ENCODE measurements at regions of chr15 and their contacts with region 1.

Region 1: GRCh38 chr15:69394556-69395282 is 19.4 kb upstream of the KIF23 start:
- DNase-seq: no peak
- ATAC-seq: peak; percentile 99
- H3K4me3 ChIP-seq: no peak overlapping the region
- H3K27ac ChIP-seq: no peak overlapping the region
- H3K4me1 ChIP-seq: no peaks in the 10 kb centered on the region
- H3K27me3 ChIP-seq: no peaks in the 10 kb centered on the region
- CTCF ChIP-seq: peak; percentile 85 to 93 (median 85)
- EP300 ChIP-seq: no peak
- POLR2A ChIP-seq: no peak
- RAD21 ChIP-seq: peak; percentile 61

Region 2: DNA sequence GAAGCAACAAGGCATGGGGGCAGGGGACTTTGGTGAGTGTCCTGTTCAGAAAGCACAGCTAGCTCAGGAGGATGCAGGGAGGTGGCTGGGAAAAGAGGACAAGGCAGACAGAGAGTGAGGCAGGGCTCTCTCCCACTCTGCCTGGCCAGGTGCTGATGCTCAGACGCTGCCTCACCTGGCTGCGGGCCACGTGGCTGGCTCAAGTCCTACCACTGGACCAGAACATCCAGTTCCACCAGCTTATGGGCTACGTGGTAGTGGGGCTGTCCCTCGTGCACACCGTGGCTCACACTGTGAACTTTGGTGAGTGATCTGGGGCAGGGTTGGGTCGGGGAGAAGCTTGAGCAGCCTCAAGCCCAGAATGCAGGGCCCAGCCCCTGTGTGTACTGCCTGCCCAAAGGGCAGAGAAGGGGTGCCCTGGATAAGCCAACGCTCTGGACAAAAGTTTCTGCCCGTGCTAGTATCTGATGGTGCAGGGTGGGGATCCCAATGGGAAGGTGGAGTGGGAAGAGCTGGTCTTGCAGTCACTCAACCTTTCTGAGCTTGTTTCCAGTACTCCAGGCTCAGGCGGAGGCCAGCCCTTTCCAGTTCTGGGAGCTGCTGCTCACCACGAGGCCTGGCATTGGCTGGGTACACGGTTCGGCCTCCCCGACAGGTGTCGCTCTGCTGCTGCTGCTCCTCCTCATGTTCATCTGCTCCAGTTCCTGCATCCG is 359.4 kb before region 1 on chr15:
- CTCF ChIA-PET with region 1: interaction called, 25 read pairs
- POLR2A ChIA-PET with region 1: no interaction called
- RAD21 ChIA-PET with region 1: interaction called, 3 read pairs
- SMC1A ChIA-PET with region 1: no interaction called
- in situ Hi-C with region 1: no loop called
- intact Hi-C with region 1: loop called (anchors 5 kb)
- DNase-seq: no peak
- ATAC-seq: peak; percentile 94
- H3K4me3 ChIP-seq: no peak overlapping the region
- H3K27ac ChIP-seq: no peak overlapping the region
- H3K4me1 ChIP-seq: no peaks in the 10 kb centered on the region
- H3K27me3 ChIP-seq: peaks cover 2 to 5% of the 10 kb centered on the region in 2 experiments; a peak in 2 of 4 replicates
- CTCF ChIP-seq: peak; percentile 29 to 76 (median 59); a peak in 5 of 6 replicates
- EP300 ChIP-seq: no peak
- POLR2A ChIP-seq: no peak
- RAD21 ChIP-seq: no peak

Measured in GM12878 (cell line).